CD4-positive, alpha-beta T cell (primary cell): ENCODE measurements at regions of chr18 and their contacts with region 1.

Region 1: GRCh38 chr18:70621710-70622109 is 332.9 kb downstream of the SOCS6 start:
- DNase-seq: peak in 12 of 14 experiments; percentile 9 to 60 (median 32)
- ATAC-seq: peak; percentile 86
- H3K4me3 ChIP-seq: peak overlapping the region; percentile 31
- H3K4me3 Mint-ChIP-seq: peak overlapping the region; percentile 85
- H3K27ac ChIP-seq: peak overlapping the region; percentile 47 to 66
- H3K27ac Mint-ChIP-seq: peak overlapping the region; percentile 95
- H3K4me1 ChIP-seq: peaks cover 32% of the 10 kb centered on the region
- H3K4me1 Mint-ChIP-seq: peaks cover 71% of the 10 kb centered on the region
- H3K27me3 ChIP-seq: no peaks in the 10 kb centered on the region
- H3K27me3 Mint-ChIP-seq: no peaks in the 10 kb centered on the region
- CTCF ChIP-seq: no peak

Region 2: DNA sequence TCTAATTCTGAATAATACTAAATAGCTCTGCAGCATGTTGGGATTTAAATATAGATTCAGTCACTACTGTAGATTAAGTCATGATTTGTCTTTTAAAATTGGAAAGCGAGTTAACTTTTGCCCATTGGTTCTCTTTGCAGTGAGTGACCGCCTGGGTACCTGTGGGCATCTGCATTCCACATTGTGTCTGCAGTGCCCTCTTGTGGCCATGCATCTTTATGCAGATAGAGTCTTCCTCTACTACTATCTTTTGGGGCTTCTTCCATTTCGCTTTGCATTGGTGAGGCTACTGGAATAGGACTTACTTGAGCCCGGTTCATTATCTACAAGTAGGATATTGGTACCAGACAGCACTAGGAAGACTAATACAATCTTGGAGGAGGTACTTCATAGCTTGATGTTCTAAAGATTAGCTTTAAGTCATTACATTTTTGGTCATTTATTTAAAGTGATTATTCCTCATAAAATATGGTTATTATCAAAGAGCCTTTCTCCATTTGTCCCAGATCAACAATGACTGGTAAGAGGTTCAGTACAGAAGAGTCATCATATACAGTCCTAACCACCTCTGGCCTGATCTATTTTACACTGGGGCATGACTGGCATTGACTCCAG is 129.9 kb before region 1 on chr18:
- CTCF ChIA-PET with region 1: no interaction called
- POLR2A ChIA-PET with region 1: no interaction called
- intact Hi-C with region 1: no loop called
- DNase-seq: peak in 12 of 14 experiments; percentile 9 to 65 (median 38)
- ATAC-seq: peak; percentile 61
- H3K4me3 ChIP-seq: no peak overlapping the region
- H3K4me3 Mint-ChIP-seq: no peak overlapping the region
- H3K27ac ChIP-seq: no peak overlapping the region
- H3K27ac Mint-ChIP-seq: no peak overlapping the region
- H3K4me1 ChIP-seq: no peaks in the 10 kb centered on the region
- H3K4me1 Mint-ChIP-seq: peaks cover 17% of the 10 kb centered on the region
- H3K27me3 ChIP-seq: no peaks in the 10 kb centered on the region
- H3K27me3 Mint-ChIP-seq: no peaks in the 10 kb centered on the region
- CTCF ChIP-seq: peak; percentile 84

Region 3: GRCh38 chr18:70636991-70637390 is 15.3 kb after region 1 on chr18:
- CTCF ChIA-PET with region 1: no interaction called
- POLR2A ChIA-PET with region 1: interaction called, 13 read pairs
- intact Hi-C with region 1: no loop called
- DNase-seq: no peak
- ATAC-seq: no peak
- H3K4me3 ChIP-seq: no peak overlapping the region
- H3K4me3 Mint-ChIP-seq: no peak overlapping the region
- H3K27ac ChIP-seq: no peak overlapping the region
- H3K27ac Mint-ChIP-seq: no peak overlapping the region
- H3K4me1 ChIP-seq: peaks cover 6% of the 10 kb centered on the region
- H3K4me1 Mint-ChIP-seq: peaks cover 32% of the 10 kb centered on the region
- H3K27me3 ChIP-seq: no peaks in the 10 kb centered on the region
- H3K27me3 Mint-ChIP-seq: no peaks in the 10 kb centered on the region
- CTCF ChIP-seq: no peak

Region 4: GRCh38 chr18:70650878-70651277 is 29.2 kb after region 1 on chr18:
- CTCF ChIA-PET with region 1: no interaction called
- POLR2A ChIA-PET with region 1: interaction called, 6 read pairs
- intact Hi-C with region 1: loop called (anchors 5 kb)
- DNase-seq: peak in 1 of 14 experiments; percentile 47
- ATAC-seq: no peak
- H3K4me3 ChIP-seq: no peak overlapping the region
- H3K4me3 Mint-ChIP-seq: no peak overlapping the region
- H3K27ac ChIP-seq: no peak overlapping the region
- H3K27ac Mint-ChIP-seq: peak overlapping the region; percentile 34
- H3K4me1 ChIP-seq: peaks cover 5% of the 10 kb centered on the region
- H3K4me1 Mint-ChIP-seq: peaks cover 13% of the 10 kb centered on the region
- H3K27me3 ChIP-seq: no peaks in the 10 kb centered on the region
- H3K27me3 Mint-ChIP-seq: no peaks in the 10 kb centered on the region
- CTCF ChIP-seq: no peak